ENCODE measurements at regions of chr5 and their contacts with region 1.

Region 1: GRCh38 chr5:140647042-140647341 is 438 bp downstream of the NDUFA2 start:
- DNase-seq: no peak
- ATAC-seq: peak; percentile 32 to 39
- H3K4me3 ChIP-seq: peak overlapping the region; percentile 83
- H3K27ac ChIP-seq: peak overlapping the region; percentile 85 to 91
- H3K4me1 ChIP-seq: peaks cover 11% of the 10 kb centered on the region; the same call in 1 of the 3 replicates
- CTCF ChIP-seq: no peak
- EP300 ChIP-seq: no peak
- POLR2A ChIP-seq: no peak
- RAD21 ChIP-seq: no peak

Region 2: DNA sequence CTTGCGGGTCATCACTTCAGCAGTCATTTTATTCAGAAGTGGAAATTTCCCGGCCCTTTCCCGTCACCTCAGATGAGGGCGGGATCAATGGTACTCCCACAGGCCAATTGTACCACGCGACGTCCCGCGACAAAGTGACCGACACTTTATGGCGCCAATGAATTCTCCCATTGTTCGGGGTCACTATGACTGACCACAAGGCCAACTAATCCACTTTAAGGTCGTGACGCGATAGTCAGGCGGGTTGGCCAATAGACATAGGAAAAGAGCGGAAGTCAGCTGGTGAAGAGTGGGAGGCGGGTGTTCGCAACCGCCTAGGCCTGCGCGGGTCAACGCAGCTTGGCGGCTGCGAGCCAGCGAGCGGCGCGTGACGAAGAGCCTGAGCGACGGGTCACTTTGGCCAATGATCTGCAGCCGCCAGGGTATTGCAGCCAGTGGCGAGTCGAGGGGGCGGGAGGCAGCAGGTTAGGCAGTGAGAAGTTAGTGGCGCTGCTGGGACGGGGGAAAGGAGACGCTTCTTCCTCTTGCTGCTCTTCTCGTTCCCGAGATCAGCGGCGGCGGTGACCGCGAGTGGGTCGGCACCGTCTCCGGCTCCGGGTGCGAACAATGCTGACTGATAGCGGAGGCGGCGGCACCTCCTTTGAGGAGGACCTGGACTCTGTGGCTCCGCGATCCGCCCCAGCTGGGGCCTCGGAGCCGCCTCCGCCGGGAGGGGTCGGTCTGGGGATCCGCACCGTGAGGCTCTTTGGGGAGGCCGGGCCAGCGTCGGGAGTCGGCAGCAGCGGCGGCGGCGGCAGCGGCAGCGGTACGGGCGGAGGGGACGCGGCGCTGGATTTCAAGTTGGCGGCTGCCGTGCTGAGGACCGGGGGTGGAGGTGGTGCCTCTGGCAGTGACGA is 245.4 kb before region 1 on chr5 and contains the start of gene ANKHD1:
- CTCF ChIA-PET with region 1: no interaction called
- POLR2A ChIA-PET with region 1: interaction called, 15 read pairs
- DNase-seq: peak; percentile 97 to 100
- ATAC-seq: peak; percentile 83 to 86
- H3K4me3 ChIP-seq: peak within 1 kb of the TSS; percentile 65
- H3K27ac ChIP-seq: peak within 1 kb of the TSS; percentile 91 to 95
- H3K4me1 ChIP-seq: peaks cover 37% of the 10 kb centered on the region
- CTCF ChIP-seq: no peak
- EP300 ChIP-seq: no peak
- POLR2A ChIP-seq: peak; percentile 85
- RAD21 ChIP-seq: no peak
- polyA plus RNA-seq, gene ANKHD1: 94.1 and 111 TPM in 2 replicates

Region 3: DNA sequence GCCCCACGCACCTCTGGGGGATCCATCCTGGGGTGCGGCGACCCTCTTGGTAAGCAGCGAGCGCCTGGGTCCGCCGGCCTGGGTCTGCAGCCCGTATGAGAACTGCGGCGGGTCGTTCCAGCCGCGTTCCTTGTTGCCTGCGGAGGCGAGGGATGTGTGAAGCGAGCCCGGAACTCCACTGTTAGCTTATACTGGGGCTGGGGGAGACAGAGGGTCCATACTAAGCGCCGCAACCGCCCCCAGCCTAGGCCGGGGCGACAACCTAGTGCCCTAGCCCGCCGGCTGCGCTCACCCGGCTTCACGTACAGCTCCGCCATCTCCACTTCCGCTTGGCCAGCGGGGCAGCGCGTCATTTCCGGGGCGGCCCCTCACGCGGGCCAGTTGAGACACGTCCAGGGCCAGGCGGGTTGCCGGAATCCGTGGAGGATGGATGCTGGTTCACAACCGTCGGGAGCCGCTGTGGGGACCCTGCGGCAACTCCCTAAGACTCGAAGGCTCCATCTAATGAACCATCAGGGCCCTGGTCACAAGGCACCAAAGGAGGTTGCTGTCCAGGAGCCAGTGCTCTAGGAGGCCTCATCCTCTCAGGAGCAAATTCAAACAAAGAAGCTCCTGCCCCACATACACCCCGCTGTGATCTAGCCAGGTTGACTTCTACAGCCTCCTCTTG is 89.7 kb before region 1 on chr5 and contains the start of gene SRA1:
- CTCF ChIA-PET with region 1: interaction called, 5 read pairs
- POLR2A ChIA-PET with region 1: interaction called, 32 read pairs
- DNase-seq: peak; percentile 90 to 97
- ATAC-seq: peak; percentile 93 to 97
- H3K4me3 ChIP-seq: peak within 1 kb of the TSS; percentile 75
- H3K27ac ChIP-seq: peak within 1 kb of the TSS; percentile 89 to 96
- H3K4me1 ChIP-seq: peaks cover 31% of the 10 kb centered on the region
- CTCF ChIP-seq: no peak
- EP300 ChIP-seq: no peak
- POLR2A ChIP-seq: peak; percentile 97
- RAD21 ChIP-seq: 0 out of 5 replicates have a peak, but pooled peaks of 1 of the 2 experiments have one; percentile 21
- polyA plus RNA-seq, gene SRA1: 48.1 and 50.8 TPM in 2 replicates

Region 4: GRCh38 chr5:140632150-140633020 is 14.6 kb before region 1 on chr5:
- CTCF ChIA-PET with region 1: interaction called, 3 read pairs
- POLR2A ChIA-PET with region 1: interaction called, 13 read pairs
- DNase-seq: no peak
- ATAC-seq: no peak; a peak in 1 of 6 replicates
- H3K4me3 ChIP-seq: 0 out of 3 replicates have a peak overlapping the region, but pooled peaks have one; percentile 5
- H3K27ac ChIP-seq: peak overlapping the region; percentile 45 to 83
- H3K4me1 ChIP-seq: peaks cover 32% of the 10 kb centered on the region
- CTCF ChIP-seq: no peak
- EP300 ChIP-seq: no peak
- POLR2A ChIP-seq: no peak
- RAD21 ChIP-seq: no peak

Region 5: GRCh38 chr5:140690941-140691924 is 44.2 kb after region 1 on chr5 and contains the starts of genes HARS1 and HARS2:
- CTCF ChIA-PET with region 1: no interaction called
- POLR2A ChIA-PET with region 1: interaction called, 23 read pairs
- DNase-seq: peak; percentile 97 to 98
- ATAC-seq: peak; percentile 98 to 99
- H3K4me3 ChIP-seq: peak within 1 kb of the TSS; percentile 81
- H3K27ac ChIP-seq: peak within 1 kb of the TSS; percentile 90 to 91
- H3K4me1 ChIP-seq: peaks cover 17% of the 10 kb centered on the region
- CTCF ChIP-seq: no peak
- EP300 ChIP-seq: no peak
- POLR2A ChIP-seq: peak; percentile 93
- RAD21 ChIP-seq: peak in 1 of 2 experiments; percentile 28; a peak in 1 of 5 replicates
- polyA plus RNA-seq, gene HARS1: 73.0 and 80.5 TPM in 2 replicates
- polyA plus RNA-seq, gene HARS2: 46.6 and 55.1 TPM in 2 replicates

Region 6: GRCh38 chr5:140710899-140711552 is 64.0 kb after region 1 on chr5:
- CTCF ChIA-PET with region 1: interaction called, 3 read pairs
- POLR2A ChIA-PET with region 1: interaction called, 20 read pairs
- DNase-seq: peak; percentile 94 to 98
- ATAC-seq: peak; percentile 94 to 96
- H3K4me3 ChIP-seq: peak overlapping the region; percentile 46
- H3K27ac ChIP-seq: peak overlapping the region; percentile 81 to 93
- H3K4me1 ChIP-seq: peaks cover 9% of the 10 kb centered on the region; the same call in 2 of the 3 replicates
- CTCF ChIP-seq: no peak
- EP300 ChIP-seq: peak in 1 of 2 experiments; percentile 20; a peak in 1 of 5 replicates
- POLR2A ChIP-seq: peak; percentile 46
- RAD21 ChIP-seq: no peak

Region 7: GRCh38 chr5:140725799-140726471 is 78.9 kb after region 1 on chr5:
- CTCF ChIA-PET with region 1: no interaction called
- POLR2A ChIA-PET with region 1: interaction called, 14 read pairs
- DNase-seq: peak; percentile 90 to 98
- ATAC-seq: peak; percentile 97 to 98
- H3K4me3 ChIP-seq: peak overlapping the region; percentile 53
- H3K27ac ChIP-seq: peak overlapping the region; percentile 24 to 69; a peak in 4 of 6 replicates
- H3K4me1 ChIP-seq: 0 out of 3 replicates have a peak, but pooled peaks cover 3% of the 10 kb centered on the region
- CTCF ChIP-seq: no peak
- EP300 ChIP-seq: no peak
- POLR2A ChIP-seq: no peak
- RAD21 ChIP-seq: no peak; a peak in 1 of 5 replicates

Region 8: GRCh38 chr5:140925806-140926442 is 278.9 kb after region 1 on chr5 and contains the start of gene PCDHAC1:
- CTCF ChIA-PET with region 1: no interaction called
- POLR2A ChIA-PET with region 1: no interaction called
- DNase-seq: peak in 1 of 2 experiments; percentile 47
- ATAC-seq: peak; percentile 84 to 85
- H3K4me3 ChIP-seq: peak within 1 kb of the TSS; percentile 53
- H3K27ac ChIP-seq: peak within 1 kb of the TSS; percentile 54 to 80
- H3K4me1 ChIP-seq: 0 out of 3 replicates have a peak, but pooled peaks cover 4% of the 10 kb centered on the region
- CTCF ChIP-seq: no peak
- EP300 ChIP-seq: no peak
- POLR2A ChIP-seq: no peak
- RAD21 ChIP-seq: no peak
- polyA plus RNA-seq, gene PCDHAC1: 3.3 and 3.5 TPM in 2 replicates

Measured in A549 (cell line).